ENCODE measurements at regions of chr5 and their contacts with region 1.

Region 1: DNA sequence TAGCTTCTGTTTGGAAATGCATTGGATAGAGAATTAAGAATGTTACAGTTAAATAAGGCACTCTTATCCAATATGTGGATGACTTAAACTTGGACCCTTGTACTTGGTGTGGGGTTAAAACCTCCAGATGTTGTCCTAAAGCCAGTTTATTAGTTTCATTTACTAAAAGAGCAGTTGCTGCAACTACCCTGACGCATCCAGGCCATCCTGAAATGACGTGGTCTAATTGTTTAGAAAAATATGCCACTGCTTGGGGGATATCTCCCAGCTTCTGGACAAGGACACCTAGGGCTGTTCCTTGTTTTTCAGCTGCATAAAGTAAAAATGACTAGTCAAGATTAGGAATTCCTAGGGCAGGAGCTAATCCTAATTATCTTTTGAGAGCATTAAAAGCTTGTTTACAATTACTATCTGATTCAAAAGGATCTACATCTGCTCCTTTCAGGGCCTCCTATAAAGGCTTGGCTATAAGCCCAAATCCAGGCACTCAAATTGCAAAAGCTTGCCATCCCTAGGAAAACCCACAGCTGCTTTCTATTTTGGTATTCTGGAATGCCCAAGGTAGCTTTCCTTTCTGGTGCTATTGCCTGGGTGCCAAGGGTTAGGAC is 45.7 kb upstream of the SLCO4C1 start:
- DNase-seq: no peak
- ATAC-seq: no peak
- H3K4me3 Mint-ChIP-seq: no peak overlapping the region
- H3K27ac Mint-ChIP-seq: no peak overlapping the region
- H3K4me1 Mint-ChIP-seq: peaks cover 9% of the 10 kb centered on the region
- H3K27me3 Mint-ChIP-seq: peaks cover 28% of the 10 kb centered on the region
- CTCF ChIP-seq: no peak

Region 2: GRCh38 chr5:102296178-102296817 is 45.5 kb before region 1 on chr5 and contains the start of gene SLCO4C1:
- CTCF ChIA-PET with region 1: interaction called, 16 read pairs
- POLR2A ChIA-PET with region 1: no interaction called
- DNase-seq: peak; percentile 98
- ATAC-seq: peak; percentile 96
- H3K4me3 Mint-ChIP-seq: peak within 1 kb of the TSS; percentile 74
- H3K27ac Mint-ChIP-seq: peak within 1 kb of the TSS; percentile 91
- H3K4me1 Mint-ChIP-seq: peaks cover 19% of the 10 kb centered on the region
- H3K27me3 Mint-ChIP-seq: peaks cover 8% of the 10 kb centered on the region; the same call in 1 of the 2 replicates
- CTCF ChIP-seq: peak; percentile 63; the same call in 1 of the 2 replicates
- total RNA-seq, gene SLCO4C1: 5.4 to 6.2 TPM (median 6.0 TPM) in 3 replicates

Region 3: DNA sequence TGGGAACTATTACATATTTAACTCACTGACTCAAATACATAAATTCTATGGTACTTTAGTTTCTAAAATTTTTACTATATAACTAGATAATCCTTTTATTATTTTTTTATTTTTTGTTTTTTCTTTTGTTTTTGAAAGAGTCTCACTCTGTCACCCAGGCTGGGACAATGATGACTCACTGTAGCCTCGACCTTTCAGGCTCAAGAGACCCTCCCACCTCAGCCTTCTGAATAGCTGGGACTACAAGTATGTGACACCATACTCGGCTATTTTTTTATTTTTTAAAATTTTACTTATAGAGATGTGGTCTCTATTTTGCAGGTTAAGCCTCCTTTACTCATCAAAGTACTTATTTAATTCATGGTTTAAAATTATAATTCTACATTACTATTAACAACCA is 46.5 kb after region 1 on chr5:
- CTCF ChIA-PET with region 1: no interaction called
- POLR2A ChIA-PET with region 1: no interaction called
- DNase-seq: no peak
- ATAC-seq: no peak
- H3K4me3 Mint-ChIP-seq: no peak overlapping the region
- H3K27ac Mint-ChIP-seq: no peak overlapping the region
- H3K4me1 Mint-ChIP-seq: no peaks in the 10 kb centered on the region
- H3K27me3 Mint-ChIP-seq: no peaks in the 10 kb centered on the region
- CTCF ChIP-seq: no peak

Region 4: DNA sequence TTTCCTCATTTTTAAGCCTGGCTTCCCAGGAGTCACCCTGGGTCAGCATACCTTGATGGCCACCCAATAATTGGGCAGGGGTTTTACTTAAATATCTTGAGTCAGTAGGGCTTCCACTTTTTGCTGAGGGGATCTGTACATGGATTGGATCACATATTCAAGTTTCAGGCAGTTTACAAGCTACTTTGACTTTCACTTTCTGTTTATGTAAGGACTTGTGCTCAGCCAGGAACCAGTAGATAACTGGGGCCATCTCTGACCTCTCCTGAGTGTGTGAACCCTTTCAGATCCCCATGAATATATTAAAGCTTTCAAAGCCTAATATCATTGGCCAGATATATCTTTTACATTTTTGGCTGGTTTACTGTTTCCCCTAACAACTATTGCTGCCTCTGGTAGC is 111.9 kb after region 1 on chr5:
- CTCF ChIA-PET with region 1: no interaction called
- POLR2A ChIA-PET with region 1: no interaction called
- DNase-seq: no peak
- ATAC-seq: no peak
- H3K4me3 Mint-ChIP-seq: no peak overlapping the region
- H3K27ac Mint-ChIP-seq: no peak overlapping the region
- H3K4me1 Mint-ChIP-seq: no peaks in the 10 kb centered on the region
- H3K27me3 Mint-ChIP-seq: no peaks in the 10 kb centered on the region
- CTCF ChIP-seq: no peak